ENCODE measurements at regions of chr18 and their contacts with region 1.

Region 1: DNA sequence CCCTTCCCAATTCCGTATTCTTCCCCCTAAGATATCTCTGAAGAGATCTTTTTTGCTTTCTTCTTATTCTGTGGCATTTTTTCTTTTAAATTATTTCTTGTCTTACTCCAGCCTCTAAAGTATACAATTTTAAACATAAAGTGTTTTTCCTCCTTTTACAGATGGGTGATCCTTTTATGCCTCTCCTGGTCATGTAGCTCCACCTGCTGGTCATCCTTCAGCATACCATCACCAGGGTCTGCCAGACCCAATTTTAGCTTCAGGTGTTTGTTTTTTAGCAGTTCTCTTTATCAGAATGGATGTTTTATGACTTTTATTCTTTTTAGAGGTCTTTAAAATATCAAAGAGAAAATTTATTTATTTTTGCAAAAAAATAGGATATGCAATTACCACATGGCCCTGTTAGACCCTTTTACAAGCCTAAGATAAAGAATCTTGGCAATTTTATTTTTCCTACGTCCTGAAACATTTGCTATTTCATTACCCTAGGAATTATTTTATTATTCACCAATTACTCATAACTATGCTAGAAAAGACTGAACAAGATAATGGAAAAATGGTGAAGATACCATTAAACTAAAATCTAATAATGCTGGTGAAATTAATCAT is 55.5 kb downstream of the PIGN start:
- DNase-seq: peak in 1 of 2 donors; percentile 49
- ATAC-seq: no peak
- H3K4me3 ChIP-seq: no peak overlapping the region
- H3K27ac ChIP-seq: no peak overlapping the region
- H3K4me1 ChIP-seq: no peaks in the 10 kb centered on the region
- H3K27me3 ChIP-seq: no peaks in the 10 kb centered on the region

Region 2: DNA sequence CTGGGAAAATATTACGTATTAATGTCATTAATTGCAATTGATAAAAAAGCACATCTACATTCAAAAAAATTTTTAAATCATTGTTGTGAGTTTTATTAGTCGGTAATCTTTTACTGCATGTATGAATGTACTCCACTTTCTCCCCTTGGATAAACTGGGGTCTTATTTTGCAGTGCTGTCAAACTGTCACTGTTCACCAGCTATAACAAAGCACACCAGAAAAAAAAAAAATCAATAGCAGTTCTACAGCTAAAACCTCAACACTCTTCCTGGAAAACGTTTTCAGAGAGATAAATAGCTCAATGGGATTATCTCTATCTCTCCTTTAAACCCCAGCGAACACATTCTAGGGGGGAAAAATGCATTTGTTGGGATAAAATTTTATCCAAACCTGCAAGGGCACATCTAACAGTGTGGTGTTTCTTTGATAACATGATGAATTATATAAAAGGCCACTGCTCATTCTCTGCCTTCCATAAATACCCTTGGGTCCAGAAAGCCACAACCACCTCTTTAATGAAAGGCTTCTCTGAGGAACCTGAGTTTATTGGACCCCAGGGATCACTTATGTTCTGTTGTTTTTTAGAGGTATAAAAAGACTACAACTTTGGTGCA is 578.3 kb before region 1 on chr18:
- intact Hi-C with region 1: loop called (anchors 2 kb)
- DNase-seq: no peak
- ATAC-seq: no peak
- H3K4me3 ChIP-seq: no peak overlapping the region
- H3K27ac ChIP-seq: no peak overlapping the region
- H3K4me1 ChIP-seq: no peaks in the 10 kb centered on the region
- H3K27me3 ChIP-seq: no peaks in the 10 kb centered on the region

Region 3: DNA sequence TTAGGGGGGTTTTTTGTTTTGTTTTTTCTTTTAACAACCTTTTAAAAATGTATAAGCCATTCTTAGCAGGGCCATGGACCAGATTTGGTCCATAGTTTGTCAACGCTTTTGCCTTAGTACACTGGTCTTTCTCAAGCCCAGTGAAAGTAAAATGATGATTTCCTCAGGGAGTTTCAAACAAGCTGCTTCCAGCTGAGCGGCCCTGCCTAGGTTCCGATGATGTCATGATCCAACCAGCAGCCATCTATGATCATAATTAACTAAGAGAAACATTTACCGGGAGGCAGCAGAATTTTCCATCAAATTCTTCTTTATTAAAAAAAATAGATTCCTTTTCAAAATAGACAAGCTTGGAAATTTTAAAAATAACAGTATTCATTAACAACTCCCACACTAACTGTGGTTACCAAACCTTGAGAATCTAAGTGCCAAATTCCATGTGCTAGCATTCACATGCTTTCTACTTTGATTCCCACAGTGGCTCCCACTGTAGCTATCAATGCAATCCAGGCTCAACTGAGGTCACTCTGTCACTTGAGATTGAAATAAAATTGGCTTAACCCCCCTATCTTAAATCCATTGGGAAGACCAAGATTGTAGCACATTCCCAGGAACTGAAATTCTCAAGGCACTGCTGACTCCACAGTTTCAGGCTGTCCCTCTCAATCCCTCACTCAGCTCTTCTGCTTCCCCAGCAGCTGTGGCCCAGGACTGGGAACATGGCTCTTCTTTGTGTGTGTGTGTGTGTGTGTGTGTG is 387.5 kb before region 1 on chr18:
- intact Hi-C with region 1: no loop called
- DNase-seq: no peak
- ATAC-seq: no peak
- H3K4me3 ChIP-seq: no peak overlapping the region
- H3K27ac ChIP-seq: peak overlapping the region; percentile 41 to 84
- H3K4me1 ChIP-seq: peaks cover 8 to 12% of the 10 kb centered on the region in 2 donors
- H3K27me3 ChIP-seq: no peaks in the 10 kb centered on the region

Region 4: GRCh38 chr18:62069556-62069955 is 61.8 kb before region 1 on chr18:
- intact Hi-C with region 1: no loop called
- DNase-seq: no peak
- ATAC-seq: no peak
- H3K4me3 ChIP-seq: no peak overlapping the region
- H3K27ac ChIP-seq: no peak overlapping the region
- H3K4me1 ChIP-seq: no peaks in the 10 kb centered on the region
- H3K27me3 ChIP-seq: no peaks in the 10 kb centered on the region

Measured in aorta (tissue), 5 donors.